Right ventricle myocardium inferior (tissue), 1 donor: ENCODE measurements at regions of chr20 and their contacts with region 1.

Region 1: DNA sequence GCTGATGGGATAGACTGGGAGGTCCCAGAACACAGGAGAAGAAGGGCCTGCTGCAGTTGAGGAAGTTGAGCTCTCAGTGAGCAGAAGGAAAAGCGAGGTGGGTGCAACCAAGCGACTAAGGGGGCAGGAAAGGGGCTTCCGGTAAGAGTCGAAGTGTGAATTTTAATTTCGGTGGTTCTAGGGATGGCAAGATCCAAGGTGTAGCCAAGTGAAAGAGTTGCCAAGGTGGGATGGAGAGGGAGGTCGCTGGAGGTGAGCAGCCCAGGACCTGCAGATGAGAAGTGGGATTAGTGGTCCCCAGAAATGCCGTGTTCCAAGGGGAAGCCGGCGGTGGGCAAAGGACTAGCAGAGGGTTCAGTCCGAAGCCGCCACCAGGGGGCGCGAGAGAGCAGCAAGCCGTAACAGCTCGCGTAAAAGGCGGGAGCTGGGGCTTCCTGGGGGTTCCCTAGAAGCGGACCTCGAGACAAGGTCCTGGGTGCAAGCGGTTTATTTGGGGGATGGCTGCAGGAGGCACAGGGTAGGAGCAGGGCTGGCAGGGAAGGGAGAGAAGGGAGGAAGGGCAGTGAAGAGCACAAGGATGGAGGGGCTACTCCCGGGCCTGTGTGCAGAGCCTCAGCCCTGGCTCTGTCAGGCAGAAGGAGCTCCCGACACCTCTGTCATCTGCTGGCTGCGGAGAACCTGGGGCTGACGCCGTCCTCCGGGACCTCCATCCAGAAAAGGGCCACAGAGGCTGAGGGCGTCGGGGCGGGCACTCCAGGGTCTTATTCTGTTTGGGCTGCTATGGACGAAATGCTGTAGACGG is 103.6 kb downstream of the PAX1 start:
- DNase-seq: peak; percentile 83
- ATAC-seq: no peak

Region 2: GRCh38 chr20:21936261-21936660 is 127.2 kb after region 1 on chr20:
- intact Hi-C with region 1: no loop called
- DNase-seq: no peak
- ATAC-seq: no peak

Region 3: DNA sequence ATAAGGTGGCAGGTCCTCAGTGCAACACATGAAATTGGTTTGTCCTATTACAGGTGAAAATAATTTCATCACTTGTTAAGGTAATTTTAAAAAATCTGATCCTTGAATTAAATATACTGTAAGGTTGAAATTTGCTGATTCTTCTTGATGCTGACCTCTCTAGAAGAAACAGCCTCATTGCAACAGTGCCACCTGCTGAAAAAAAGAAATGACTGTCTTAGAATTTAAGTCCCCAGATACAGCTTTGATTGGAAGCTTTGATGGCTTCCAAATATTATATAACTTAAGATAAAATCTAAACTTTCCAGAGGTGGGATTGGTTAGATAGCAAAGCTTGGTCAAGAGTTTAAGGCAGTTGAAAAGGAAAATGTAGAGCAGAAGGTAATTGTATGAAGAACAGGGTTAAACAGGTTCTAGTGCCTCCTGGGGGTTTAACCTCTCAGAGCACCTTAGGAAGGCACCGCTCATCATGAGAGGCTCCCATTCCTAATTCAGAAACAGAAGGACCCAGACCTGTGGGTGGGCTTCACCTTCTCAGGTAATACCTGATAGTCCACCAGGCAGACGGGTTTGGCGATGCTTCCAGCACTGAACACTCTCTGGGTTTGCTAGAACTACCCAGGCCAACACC is 297.4 kb after region 1 on chr20:
- intact Hi-C with region 1: loop called (anchors 10 kb)
- DNase-seq: no peak
- ATAC-seq: no peak